H1 (cell line): ENCODE measurements at regions of chr12 and their contacts with region 1.

Region 1: GRCh38 chr12:104352106-104352713 is 48.7 kb downstream of the EID3 start:
- DNase-seq: peak in 1 of 2 experiments; percentile 29
- H3K4me3 ChIP-seq: no peak overlapping the region
- H3K27ac ChIP-seq: no peak overlapping the region
- H3K4me1 ChIP-seq: peaks cover 0 to 8% (median 6%) of the 10 kb centered on the region in 4 experiments; a peak in 5 of 7 replicates
- H3K27me3 ChIP-seq: no peaks in the 10 kb centered on the region
- CTCF ChIP-seq: no peak
- EP300 ChIP-seq: no peak
- POLR2A ChIP-seq: no peak
- RAD21 ChIP-seq: no peak

Region 2: DNA sequence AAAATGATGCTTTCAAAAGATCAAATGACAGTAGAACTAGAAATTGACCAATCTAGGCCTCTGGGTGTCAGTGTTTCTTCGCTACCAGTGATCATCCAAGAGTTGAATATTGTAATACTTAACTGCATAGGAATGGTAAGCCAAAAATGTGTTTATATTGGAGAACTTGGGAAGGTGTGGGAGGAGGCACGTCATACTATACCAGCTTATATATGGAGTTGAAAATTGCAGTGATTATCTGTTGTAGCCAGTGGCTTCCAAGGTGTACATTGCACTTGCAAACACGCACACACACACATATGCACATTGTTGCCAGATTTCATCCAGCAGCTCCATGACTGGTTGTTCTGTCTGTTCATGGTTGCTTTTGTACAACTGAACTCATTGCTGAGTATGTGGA is 12.5 kb before region 1 on chr12:
- CTCF ChIA-PET with region 1: interaction called, 11 read pairs
- POLR2A ChIA-PET with region 1: interaction called, 10 read pairs
- DNase-seq: no peak
- H3K4me3 ChIP-seq: no peak overlapping the region
- H3K27ac ChIP-seq: no peak overlapping the region
- H3K4me1 ChIP-seq: no peaks in the 10 kb centered on the region
- H3K27me3 ChIP-seq: no peaks in the 10 kb centered on the region
- CTCF ChIP-seq: no peak
- EP300 ChIP-seq: no peak
- POLR2A ChIP-seq: no peak
- RAD21 ChIP-seq: no peak

Region 3: DNA sequence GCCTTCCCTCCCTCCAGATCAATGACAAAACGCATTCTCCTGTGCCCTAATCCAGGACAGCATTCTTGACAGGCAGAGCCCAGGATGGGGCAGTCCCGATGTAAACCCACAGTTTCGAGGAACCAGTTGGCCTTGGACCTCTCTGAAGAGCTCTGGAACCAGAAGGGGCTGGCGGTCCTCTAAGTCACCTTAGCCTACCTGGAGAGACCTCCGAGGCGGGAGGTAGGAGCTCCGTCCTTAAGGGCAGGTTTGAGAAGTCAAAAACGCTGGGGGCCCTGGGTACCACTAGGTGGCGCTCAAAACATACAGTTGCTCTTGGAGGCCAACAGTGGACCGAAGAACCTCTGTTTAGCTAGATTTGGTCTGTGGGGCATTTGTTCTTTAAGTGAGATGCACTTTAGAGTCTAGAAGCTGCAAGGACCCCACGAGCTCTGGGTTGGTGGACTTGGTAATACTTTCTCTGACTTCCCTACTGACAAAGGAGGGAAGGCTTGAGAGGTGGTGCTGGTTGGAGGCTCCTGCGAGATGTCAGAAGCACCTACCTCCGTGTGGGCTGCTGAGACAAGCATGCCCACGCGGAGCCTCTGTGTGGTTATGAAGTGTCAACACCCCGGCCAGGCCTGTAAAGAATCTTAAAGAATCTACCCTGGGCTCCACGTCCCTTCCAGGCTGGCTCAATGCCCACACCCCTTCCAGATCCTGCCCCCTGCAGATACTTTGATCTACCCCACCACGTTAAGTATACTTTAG is 29.7 kb after region 1 on chr12:
- CTCF ChIA-PET with region 1: no interaction called
- POLR2A ChIA-PET with region 1: no interaction called
- DNase-seq: peak; percentile 71 to 93
- H3K4me3 ChIP-seq: 0 out of 8 replicates have a peak overlapping the region, but pooled peaks of 1 of the 4 experiments have one; percentile 28
- H3K27ac ChIP-seq: no peak overlapping the region
- H3K4me1 ChIP-seq: peaks cover 0 to 4% (median 3%) of the 10 kb centered on the region in 4 experiments; a peak in 4 of 7 replicates
- H3K27me3 ChIP-seq: no peaks in the 10 kb centered on the region
- CTCF ChIP-seq: peak; percentile 68 to 92 (median 92)
- EP300 ChIP-seq: peak in 1 of 2 experiments; percentile 18; a peak in 1 of 3 replicates
- POLR2A ChIP-seq: no peak
- RAD21 ChIP-seq: peak; percentile 98 to 99

Region 4: GRCh38 chr12:104494137-104494792 is 142.1 kb after region 1 on chr12:
- CTCF ChIA-PET with region 1: no interaction called
- POLR2A ChIA-PET with region 1: no interaction called
- DNase-seq: no peak
- H3K4me3 ChIP-seq: no peak overlapping the region
- H3K27ac ChIP-seq: no peak overlapping the region; the same call in 1 of the 2 replicates
- H3K4me1 ChIP-seq: peaks cover 0 to 3% (median 0%) of the 10 kb centered on the region in 4 experiments; a peak in 1 of 7 replicates
- H3K27me3 ChIP-seq: no peaks in the 10 kb centered on the region
- CTCF ChIP-seq: no peak
- EP300 ChIP-seq: no peak
- POLR2A ChIP-seq: no peak
- RAD21 ChIP-seq: no peak